GM12878 (cell line): ENCODE measurements at regions of chr3 and their contacts with region 1.

Region 1: GRCh38 chr3:42101048-42101447 is 9.9 kb downstream of the TRAK1 start:
- DNase-seq: no peak
- ATAC-seq: no peak
- H3K4me3 ChIP-seq: no peak overlapping the region
- H3K27ac ChIP-seq: no peak overlapping the region
- H3K4me1 ChIP-seq: peaks cover 8% of the 10 kb centered on the region; the same call in 1 of the 2 replicates
- H3K27me3 ChIP-seq: no peaks in the 10 kb centered on the region
- CTCF ChIP-seq: no peak
- EP300 ChIP-seq: no peak
- POLR2A ChIP-seq: no peak
- RAD21 ChIP-seq: no peak

Region 2: GRCh38 chr3:41111016-41111415 is 990.0 kb before region 1 on chr3:
- CTCF ChIA-PET with region 1: no interaction called
- POLR2A ChIA-PET with region 1: no interaction called
- RAD21 ChIA-PET with region 1: no interaction called
- SMC1A ChIA-PET with region 1: no interaction called
- in situ Hi-C with region 1: no loop called
- intact Hi-C with region 1: no loop called
- DNase-seq: no peak
- ATAC-seq: no peak; the same call in 2 of the 3 replicates
- H3K4me3 ChIP-seq: no peak overlapping the region
- H3K27ac ChIP-seq: no peak overlapping the region
- H3K4me1 ChIP-seq: no peaks in the 10 kb centered on the region
- H3K27me3 ChIP-seq: no peaks in the 10 kb centered on the region
- CTCF ChIP-seq: no peak
- EP300 ChIP-seq: no peak
- POLR2A ChIP-seq: no peak
- RAD21 ChIP-seq: no peak

Region 3: DNA sequence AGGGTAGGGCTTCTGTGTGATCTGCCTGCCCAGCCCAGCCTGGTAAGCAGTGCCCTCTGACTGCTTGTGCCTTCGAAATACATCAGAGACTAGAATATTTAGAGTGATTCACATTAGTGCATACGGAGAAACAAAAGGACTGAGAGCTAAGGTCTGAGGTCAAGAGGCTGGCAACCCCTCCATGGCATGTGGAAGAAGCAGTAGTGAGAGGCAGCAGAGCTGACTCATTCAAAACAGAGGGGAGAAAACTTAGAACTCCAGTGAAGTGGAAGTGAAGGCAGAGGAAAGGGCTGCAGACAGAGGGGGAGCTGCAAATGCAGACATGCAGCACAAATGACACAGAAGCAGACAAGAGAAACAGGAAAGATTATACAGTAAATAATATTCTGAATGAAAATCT is 200.8 kb before region 1 on chr3:
- CTCF ChIA-PET with region 1: interaction called, 87 read pairs
- POLR2A ChIA-PET with region 1: no interaction called
- RAD21 ChIA-PET with region 1: interaction called, 15 read pairs
- SMC1A ChIA-PET with region 1: interaction called, 49 read pairs
- in situ Hi-C with region 1: no loop called
- intact Hi-C with region 1: no loop called
- DNase-seq: no peak
- ATAC-seq: no peak
- H3K4me3 ChIP-seq: no peak overlapping the region
- H3K27ac ChIP-seq: no peak overlapping the region
- H3K4me1 ChIP-seq: no peaks in the 10 kb centered on the region
- H3K27me3 ChIP-seq: no peaks in the 10 kb centered on the region
- CTCF ChIP-seq: no peak
- EP300 ChIP-seq: no peak
- POLR2A ChIP-seq: no peak
- RAD21 ChIP-seq: no peak

Region 4: GRCh38 chr3:41961750-41962679 is 139.0 kb before region 1 on chr3 and contains the start of gene ULK4:
- CTCF ChIA-PET with region 1: interaction called, 10 read pairs
- POLR2A ChIA-PET with region 1: no interaction called
- RAD21 ChIA-PET with region 1: interaction called, 5 read pairs
- SMC1A ChIA-PET with region 1: interaction called, 8 read pairs
- in situ Hi-C with region 1: no loop called
- intact Hi-C with region 1: loop called (anchors 5 kb)
- DNase-seq: peak; percentile 97
- ATAC-seq: peak; percentile 96
- H3K4me3 ChIP-seq: peak within 1 kb of the TSS; percentile 86
- H3K27ac ChIP-seq: peak within 1 kb of the TSS; percentile 61
- H3K4me1 ChIP-seq: no peaks in the 10 kb centered on the region
- H3K27me3 ChIP-seq: no peaks in the 10 kb centered on the region
- CTCF ChIP-seq: no peak
- EP300 ChIP-seq: no peak
- POLR2A ChIP-seq: peak; percentile 50; the same call in 1 of the 2 replicates
- RAD21 ChIP-seq: no peak
- polyA plus RNA-seq, gene ULK4: 4.5 to 6.4 TPM

Region 5: DNA sequence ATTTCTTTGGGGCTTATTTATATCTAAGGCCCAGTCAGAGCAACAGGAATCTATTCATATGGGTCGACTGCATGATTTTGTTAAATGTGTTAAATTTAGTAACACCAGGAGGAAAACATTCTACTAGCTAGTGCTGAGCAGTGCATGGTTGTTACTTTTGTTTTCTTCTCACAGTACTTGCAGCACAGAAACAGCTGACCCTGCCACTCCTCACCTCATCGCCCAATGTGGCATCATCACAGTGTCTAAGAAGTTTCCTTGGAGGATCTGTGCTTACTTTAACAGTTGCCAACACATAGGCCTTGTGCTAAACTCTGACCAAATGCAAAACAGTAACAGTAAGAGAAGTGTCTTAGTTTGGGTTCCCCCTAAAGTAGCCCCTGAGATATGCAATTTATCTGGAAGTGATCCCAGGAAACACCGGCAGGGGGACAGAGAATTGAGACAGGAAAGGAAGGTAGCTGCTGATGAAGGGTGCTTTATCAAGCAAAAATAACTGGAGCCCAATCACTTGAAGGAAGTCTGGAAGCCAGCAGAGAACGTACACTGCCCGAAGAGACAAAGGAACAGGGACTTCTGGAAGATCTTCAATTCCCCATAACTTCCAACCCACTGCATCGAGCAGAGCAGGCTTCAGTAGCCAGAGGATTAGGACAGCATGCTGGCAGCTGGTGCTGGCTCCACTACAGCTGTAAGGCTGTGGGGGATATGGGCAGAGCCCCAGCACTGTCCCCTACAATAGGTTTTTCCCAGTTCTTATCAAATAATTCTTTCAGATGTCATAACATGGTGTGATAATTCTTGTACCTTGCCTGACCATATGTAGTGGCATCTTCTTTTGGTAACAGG is 103.1 kb before region 1 on chr3:
- CTCF ChIA-PET with region 1: interaction called, 27 read pairs
- POLR2A ChIA-PET with region 1: no interaction called
- RAD21 ChIA-PET with region 1: interaction called, 10 read pairs
- SMC1A ChIA-PET with region 1: interaction called, 9 read pairs
- in situ Hi-C with region 1: no loop called
- intact Hi-C with region 1: no loop called
- DNase-seq: no peak
- ATAC-seq: peak; percentile 69
- H3K4me3 ChIP-seq: no peak overlapping the region
- H3K27ac ChIP-seq: no peak overlapping the region
- H3K4me1 ChIP-seq: no peaks in the 10 kb centered on the region
- H3K27me3 ChIP-seq: no peaks in the 10 kb centered on the region
- CTCF ChIP-seq: peak; percentile 1 to 31 (median 15); a peak in 4 of 6 replicates
- EP300 ChIP-seq: no peak
- POLR2A ChIP-seq: no peak
- RAD21 ChIP-seq: peak; percentile 41; the same call in 1 of the 2 replicates

Region 6: GRCh38 chr3:42025370-42026138 is 75.5 kb before region 1 on chr3:
- CTCF ChIA-PET with region 1: interaction called, 8 read pairs
- POLR2A ChIA-PET with region 1: no interaction called
- RAD21 ChIA-PET with region 1: interaction called, 9 read pairs
- SMC1A ChIA-PET with region 1: interaction called, 15 read pairs
- in situ Hi-C with region 1: no loop called
- intact Hi-C with region 1: no loop called
- DNase-seq: no peak
- ATAC-seq: peak; percentile 70
- H3K4me3 ChIP-seq: peak overlapping the region; percentile 61
- H3K27ac ChIP-seq: peak overlapping the region; percentile 67
- H3K4me1 ChIP-seq: peaks cover 20% of the 10 kb centered on the region
- H3K27me3 ChIP-seq: no peaks in the 10 kb centered on the region
- CTCF ChIP-seq: no peak
- EP300 ChIP-seq: no peak
- POLR2A ChIP-seq: no peak
- RAD21 ChIP-seq: no peak

Region 7: DNA sequence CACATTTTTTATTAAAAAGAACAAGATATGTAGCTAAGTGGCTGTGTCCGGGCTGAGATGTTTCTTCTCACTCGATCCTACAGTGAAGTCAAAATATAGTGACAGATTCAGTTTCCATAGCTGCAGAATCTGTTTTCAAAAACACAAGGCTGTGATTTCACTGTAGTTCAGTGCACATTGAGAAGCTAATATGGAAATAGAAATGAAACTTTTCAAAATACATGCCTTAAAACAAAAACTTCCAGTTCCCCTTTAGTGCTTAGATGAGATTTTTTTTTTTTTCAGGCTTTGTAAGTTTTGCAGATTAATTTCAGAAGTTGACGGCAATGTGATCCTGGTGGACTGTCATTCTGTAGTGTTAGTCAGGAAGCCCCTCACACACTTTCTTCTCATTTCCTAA is 33.7 kb before region 1 on chr3:
- CTCF ChIA-PET with region 1: interaction called, 17 read pairs
- POLR2A ChIA-PET with region 1: interaction called, 4 read pairs
- RAD21 ChIA-PET with region 1: interaction called, 3 read pairs
- SMC1A ChIA-PET with region 1: interaction called, 22 read pairs
- in situ Hi-C with region 1: no loop called
- intact Hi-C with region 1: no loop called
- DNase-seq: peak; percentile 86
- ATAC-seq: peak; percentile 91
- H3K4me3 ChIP-seq: peak overlapping the region; percentile 48; the same call in 1 of the 2 replicates
- H3K27ac ChIP-seq: peak overlapping the region; percentile 86
- H3K4me1 ChIP-seq: peaks cover 35% of the 10 kb centered on the region
- H3K27me3 ChIP-seq: no peaks in the 10 kb centered on the region
- CTCF ChIP-seq: no peak
- EP300 ChIP-seq: peak; percentile 51 to 91; a peak in 3 of 4 replicates
- POLR2A ChIP-seq: no peak
- RAD21 ChIP-seq: no peak

Region 8: GRCh38 chr3:42159706-42160472 is 58.8 kb after region 1 on chr3:
- CTCF ChIA-PET with region 1: no interaction called
- POLR2A ChIA-PET with region 1: no interaction called
- RAD21 ChIA-PET with region 1: no interaction called
- SMC1A ChIA-PET with region 1: no interaction called
- in situ Hi-C with region 1: no loop called
- intact Hi-C with region 1: no loop called
- DNase-seq: no peak
- ATAC-seq: peak; percentile 82
- H3K4me3 ChIP-seq: no peak overlapping the region
- H3K27ac ChIP-seq: peak overlapping the region; percentile 34; the same call in 1 of the 2 replicates
- H3K4me1 ChIP-seq: peaks cover 28% of the 10 kb centered on the region
- H3K27me3 ChIP-seq: no peaks in the 10 kb centered on the region
- CTCF ChIP-seq: no peak
- EP300 ChIP-seq: no peak
- POLR2A ChIP-seq: no peak
- RAD21 ChIP-seq: no peak